ENCODE measurements at regions of chr4 and their contacts with region 1.

Region 1: GRCh38 chr4:4524364-4524763 is 17.5 kb downstream of the STX18 start:
- DNase-seq: no peak
- H3K4me3 ChIP-seq: no peak overlapping the region
- H3K27ac ChIP-seq: no peak overlapping the region
- H3K4me1 ChIP-seq: peaks cover 0 to 4% of the 10 kb centered on the region in 2 experiments; a peak in 3 of 4 replicates
- H3K27me3 ChIP-seq: no peaks in the 10 kb centered on the region
- CTCF ChIP-seq: no peak
- EP300 ChIP-seq: no peak
- RAD21 ChIP-seq: no peak

Region 2: GRCh38 chr4:4248885-4249203 is 275.5 kb before region 1 on chr4:
- CTCF ChIA-PET with region 1: no interaction called
- POLR2A ChIA-PET with region 1: no interaction called
- DNase-seq: peak; percentile 20
- H3K4me3 ChIP-seq: peak overlapping the region; percentile 71 to 93
- H3K27ac ChIP-seq: peak overlapping the region; percentile 91 to 98
- H3K4me1 ChIP-seq: peaks cover 5 to 11% of the 10 kb centered on the region in 2 experiments
- H3K27me3 ChIP-seq: no peaks in the 10 kb centered on the region
- CTCF ChIP-seq: no peak
- EP300 ChIP-seq: no peak
- RAD21 ChIP-seq: no peak

Region 3: DNA sequence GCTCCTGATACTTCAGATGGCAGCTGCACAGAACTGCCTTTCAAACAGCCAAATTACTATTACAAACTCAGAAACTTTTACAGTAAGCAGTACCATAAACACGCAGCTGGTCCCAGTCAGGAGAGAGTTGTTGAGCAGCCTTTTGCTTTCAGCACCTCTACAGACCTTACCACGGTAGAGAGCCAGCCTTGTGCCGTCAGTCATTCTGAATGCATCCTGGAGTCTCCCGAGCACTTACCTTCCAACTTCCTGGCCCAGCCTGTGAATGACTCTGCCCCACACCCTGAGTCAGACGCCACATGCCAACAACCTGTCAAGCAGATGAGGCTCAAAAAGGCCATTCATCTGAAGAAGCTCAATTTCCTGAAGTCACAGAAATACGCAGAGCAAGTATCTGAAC is 221.9 kb before region 1 on chr4:
- CTCF ChIA-PET with region 1: no interaction called
- POLR2A ChIA-PET with region 1: no interaction called
- DNase-seq: no peak
- H3K4me3 ChIP-seq: no peak overlapping the region
- H3K27ac ChIP-seq: no peak overlapping the region
- H3K4me1 ChIP-seq: no peaks in the 10 kb centered on the region
- H3K27me3 ChIP-seq: no peaks in the 10 kb centered on the region
- CTCF ChIP-seq: no peak
- EP300 ChIP-seq: no peak
- RAD21 ChIP-seq: no peak

Region 4: DNA sequence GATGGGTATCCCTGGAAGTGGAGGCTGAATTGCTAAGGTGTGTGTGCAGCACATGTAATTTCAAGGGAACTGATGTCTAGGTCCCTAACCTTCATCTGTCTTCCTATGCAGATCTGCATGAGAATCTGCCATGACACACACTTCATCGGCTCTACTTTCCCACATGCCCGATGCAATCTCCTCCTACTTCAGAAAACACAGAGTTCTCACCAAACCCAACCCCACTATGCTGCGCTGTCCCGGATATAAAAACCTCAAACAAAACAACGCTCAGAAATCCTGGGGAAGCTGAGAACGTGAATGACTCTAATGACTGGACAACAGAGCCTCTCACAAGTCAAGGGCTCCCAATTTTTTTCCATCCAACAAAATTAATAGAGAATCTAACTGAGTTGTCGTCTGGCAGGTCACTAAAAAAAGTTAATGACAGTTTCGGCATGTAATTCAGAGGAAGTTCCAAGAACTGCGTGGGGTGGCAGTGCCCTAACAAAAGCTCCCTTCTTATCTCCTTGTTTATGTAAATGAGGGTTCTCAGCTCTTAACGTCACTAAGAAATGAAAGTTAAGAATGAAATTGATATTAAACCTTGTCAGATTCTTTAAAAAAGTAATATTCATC is 21.6 kb before region 1 on chr4:
- CTCF ChIA-PET with region 1: interaction called, 23 read pairs
- POLR2A ChIA-PET with region 1: no interaction called
- DNase-seq: no peak
- H3K4me3 ChIP-seq: no peak overlapping the region
- H3K27ac ChIP-seq: no peak overlapping the region
- H3K4me1 ChIP-seq: peaks cover 0 to 9% of the 10 kb centered on the region in 2 experiments; a peak in 2 of 4 replicates
- H3K27me3 ChIP-seq: no peaks in the 10 kb centered on the region
- CTCF ChIP-seq: no peak
- EP300 ChIP-seq: no peak
- RAD21 ChIP-seq: no peak

Region 5: GRCh38 chr4:4507923-4508322 is 16.4 kb before region 1 on chr4:
- CTCF ChIA-PET with region 1: interaction called, 23 read pairs
- POLR2A ChIA-PET with region 1: no interaction called
- DNase-seq: peak; percentile 16
- H3K4me3 ChIP-seq: no peak overlapping the region; a peak in 1 of 4 replicates
- H3K27ac ChIP-seq: no peak overlapping the region
- H3K4me1 ChIP-seq: no peaks in the 10 kb centered on the region
- H3K27me3 ChIP-seq: no peaks in the 10 kb centered on the region
- CTCF ChIP-seq: peak; percentile 59
- EP300 ChIP-seq: no peak
- RAD21 ChIP-seq: peak; percentile 39

Region 6: GRCh38 chr4:4535590-4535989 is 11.2 kb after region 1 on chr4:
- CTCF ChIA-PET with region 1: interaction called, 15 read pairs
- POLR2A ChIA-PET with region 1: no interaction called
- DNase-seq: no peak
- H3K4me3 ChIP-seq: no peak overlapping the region
- H3K27ac ChIP-seq: no peak overlapping the region
- H3K4me1 ChIP-seq: peaks cover 0 to 2% of the 10 kb centered on the region in 2 experiments; a peak in 2 of 4 replicates
- H3K27me3 ChIP-seq: no peaks in the 10 kb centered on the region
- CTCF ChIP-seq: no peak
- EP300 ChIP-seq: no peak
- RAD21 ChIP-seq: no peak

Region 7: GRCh38 chr4:4541661-4542570 is 17.6 kb after region 1 on chr4 and contains the start of gene STX18:
- CTCF ChIA-PET with region 1: interaction called, 15 read pairs
- POLR2A ChIA-PET with region 1: no interaction called
- DNase-seq: peak; percentile 92
- H3K4me3 ChIP-seq: peak within 1 kb of the TSS; percentile 78 to 93
- H3K27ac ChIP-seq: peak within 1 kb of the TSS; percentile 70 to 85
- H3K4me1 ChIP-seq: peaks cover 3 to 12% of the 10 kb centered on the region in 2 experiments; a peak in 3 of 4 replicates
- H3K27me3 ChIP-seq: no peaks in the 10 kb centered on the region
- CTCF ChIP-seq: no peak
- EP300 ChIP-seq: peak in 1 of 2 experiments; percentile 47; a peak in 1 of 4 replicates
- RAD21 ChIP-seq: no peak
- polyA plus RNA-seq, gene STX18: 17.3 and 22.3 TPM in 2 replicates

Region 8: GRCh38 chr4:4697383-4698103 is 173.2 kb after region 1 on chr4:
- CTCF ChIA-PET with region 1: no interaction called
- POLR2A ChIA-PET with region 1: no interaction called
- DNase-seq: no peak
- H3K4me3 ChIP-seq: no peak overlapping the region
- H3K27ac ChIP-seq: no peak overlapping the region
- H3K4me1 ChIP-seq: peaks cover 0 to 5% of the 10 kb centered on the region in 2 experiments; a peak in 1 of 4 replicates
- H3K27me3 ChIP-seq: no peaks in the 10 kb centered on the region
- CTCF ChIP-seq: no peak
- EP300 ChIP-seq: no peak
- RAD21 ChIP-seq: no peak

Measured in SK-N-SH (cell line).